Activated naive CD4-positive, alpha-beta T cell treated with anti-CD3 and anti-CD28 coated beads, Interleukin-2, amount 10 ng/mL, durations not matched to agents 7 days and 5 days (primary cell): ENCODE measurements at regions of chr7 and their contacts with region 1.

Region 1: GRCh38 chr7:30564243-30564892 is 30.3 kb upstream of the GARS1 start:
- DNase-seq: peak; percentile 85
- H3K4me3 Mint-ChIP-seq: no peak overlapping the region
- H3K27ac Mint-ChIP-seq: no peak overlapping the region
- H3K4me1 Mint-ChIP-seq: no peaks in the 10 kb centered on the region
- H3K27me3 Mint-ChIP-seq: no peaks in the 10 kb centered on the region

Region 2: DNA sequence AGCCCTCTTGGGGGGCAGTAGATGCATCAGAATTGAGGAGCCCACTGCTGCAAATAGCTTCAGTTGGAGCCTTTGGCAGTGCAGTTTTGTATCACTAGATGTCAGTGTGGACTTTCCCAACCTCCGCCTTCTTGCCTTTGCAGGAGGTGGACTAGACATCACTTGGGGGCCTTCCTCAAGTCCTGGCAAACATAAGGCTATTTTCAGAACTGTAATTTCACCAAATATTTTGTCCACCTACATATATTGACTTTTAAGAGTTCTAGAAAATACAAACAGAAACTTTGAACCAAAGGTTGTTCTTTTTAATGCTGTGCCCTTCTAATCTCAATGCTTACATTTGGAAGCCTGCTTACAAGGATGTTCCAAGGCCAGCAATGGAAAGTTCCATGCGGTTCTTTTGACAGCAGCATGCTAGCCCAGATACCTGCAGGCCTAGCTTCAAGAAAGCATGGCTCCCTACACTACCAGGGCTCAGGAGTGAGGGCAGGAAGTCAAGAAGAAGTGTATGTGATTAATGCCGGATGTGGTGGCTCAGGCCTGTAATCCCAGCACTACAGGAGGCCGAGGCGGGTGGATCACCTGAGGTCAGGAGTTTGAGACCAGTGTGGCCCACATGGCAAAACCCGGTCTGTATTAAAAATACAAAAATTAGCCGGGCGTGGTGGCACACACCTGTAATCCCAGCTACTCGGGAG is 288.0 kb before region 1 on chr7:
- CTCF ChIA-PET with region 1: interaction called, 46 read pairs
- DNase-seq: peak; percentile 65
- H3K4me3 Mint-ChIP-seq: no peak overlapping the region
- H3K27ac Mint-ChIP-seq: no peak overlapping the region
- H3K4me1 Mint-ChIP-seq: peaks cover 2% of the 10 kb centered on the region
- H3K27me3 Mint-ChIP-seq: peaks cover 4% of the 10 kb centered on the region

Region 3: GRCh38 chr7:30510124-30511075 is 54.0 kb before region 1 on chr7:
- CTCF ChIA-PET with region 1: interaction called, 31 read pairs
- DNase-seq: peak; percentile 53
- H3K4me3 Mint-ChIP-seq: no peak overlapping the region
- H3K27ac Mint-ChIP-seq: no peak overlapping the region
- H3K4me1 Mint-ChIP-seq: peaks cover 6% of the 10 kb centered on the region
- H3K27me3 Mint-ChIP-seq: no peaks in the 10 kb centered on the region

Region 4: DNA sequence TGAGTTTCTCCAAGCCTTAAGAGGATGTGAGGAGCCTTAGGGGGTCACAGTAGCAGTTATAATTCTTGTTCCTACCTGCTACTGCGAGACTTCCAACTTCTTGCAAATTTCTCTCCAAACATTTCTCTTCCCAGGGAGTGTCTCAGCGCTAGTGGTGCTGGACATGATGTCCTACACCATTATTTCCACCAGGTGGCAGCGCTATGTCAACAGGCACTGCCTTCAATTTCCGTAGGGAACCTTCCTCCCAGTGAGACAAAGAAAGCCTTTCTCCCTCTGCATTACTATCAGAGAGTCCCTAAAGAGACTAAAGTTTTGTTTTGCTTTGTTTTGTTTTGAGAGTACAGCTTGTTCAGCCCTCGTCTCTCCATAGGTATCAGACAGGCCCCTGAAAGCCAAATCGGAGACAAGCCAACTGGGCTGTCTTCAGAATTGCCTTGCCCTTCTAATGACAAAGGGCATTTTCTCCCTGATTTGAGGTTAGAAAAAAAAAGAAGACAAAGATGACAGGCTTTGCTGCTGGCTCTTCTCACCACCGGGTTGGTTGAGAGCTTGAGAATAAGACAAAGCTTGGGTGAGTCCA is 15.5 kb before region 1 on chr7:
- CTCF ChIA-PET with region 1: interaction called, 83 read pairs
- DNase-seq: peak; percentile 45
- H3K4me3 Mint-ChIP-seq: no peak overlapping the region
- H3K27ac Mint-ChIP-seq: no peak overlapping the region
- H3K4me1 Mint-ChIP-seq: no peaks in the 10 kb centered on the region
- H3K27me3 Mint-ChIP-seq: no peaks in the 10 kb centered on the region